Activated CD4-positive, alpha-beta memory T cell treated with anti-CD3 and anti-CD28 coated beads for 36 hours (primary cell): ENCODE measurements at regions of chr3 and their contacts with region 1.

Region 1: GRCh38 chr3:194654443-194654842 is 17.5 kb downstream of the LSG1 start:
- DNase-seq: no peak
- H3K4me3 Mint-ChIP-seq: peak overlapping the region; percentile 11
- H3K27ac Mint-ChIP-seq: peak overlapping the region; percentile 83
- H3K4me1 Mint-ChIP-seq: peaks cover 21% of the 10 kb centered on the region
- H3K27me3 Mint-ChIP-seq: no peaks in the 10 kb centered on the region

Region 2: GRCh38 chr3:194583604-194584318 is 70.7 kb before region 1 on chr3:
- CTCF ChIA-PET with region 1: no interaction called
- POLR2A ChIA-PET with region 1: no interaction called
- intact Hi-C with region 1: loop called (anchors 2 kb)
- DNase-seq: peak; percentile 96
- H3K4me3 Mint-ChIP-seq: peak overlapping the region; percentile 96
- H3K27ac Mint-ChIP-seq: peak overlapping the region; percentile 97
- H3K4me1 Mint-ChIP-seq: peaks cover 27% of the 10 kb centered on the region
- H3K27me3 Mint-ChIP-seq: no peaks in the 10 kb centered on the region

Region 3: DNA sequence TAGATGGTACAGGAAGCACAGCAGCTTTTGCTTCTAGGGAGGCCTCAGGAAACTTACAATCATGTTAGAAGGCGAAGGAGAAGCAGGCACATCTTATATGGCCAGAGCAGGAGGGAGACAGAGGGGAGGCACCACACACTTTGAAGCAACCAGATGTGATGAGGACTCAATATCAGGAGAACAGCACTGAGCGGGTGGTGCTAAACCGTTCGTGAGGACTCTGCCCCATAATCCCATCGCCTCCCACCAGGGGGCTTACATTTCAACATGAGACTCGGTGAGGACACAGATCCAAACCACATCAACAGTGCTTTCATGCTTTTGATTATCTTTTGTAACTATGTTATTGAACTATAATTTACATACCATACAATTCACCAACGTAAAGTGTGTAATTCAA is 13.6 kb before region 1 on chr3:
- CTCF ChIA-PET with region 1: interaction called, 3 read pairs
- POLR2A ChIA-PET with region 1: interaction called, 4 read pairs
- intact Hi-C with region 1: loop called (anchors 1 kb)
- DNase-seq: peak; percentile 37
- H3K4me3 Mint-ChIP-seq: no peak overlapping the region
- H3K27ac Mint-ChIP-seq: no peak overlapping the region
- H3K4me1 Mint-ChIP-seq: peaks cover 7% of the 10 kb centered on the region
- H3K27me3 Mint-ChIP-seq: no peaks in the 10 kb centered on the region

Region 4: GRCh38 chr3:194711913-194712312 is 57.5 kb after region 1 on chr3:
- CTCF ChIA-PET with region 1: no interaction called
- POLR2A ChIA-PET with region 1: no interaction called
- intact Hi-C with region 1: no loop called
- DNase-seq: no peak
- H3K4me3 Mint-ChIP-seq: no peak overlapping the region
- H3K27ac Mint-ChIP-seq: no peak overlapping the region
- H3K4me1 Mint-ChIP-seq: peaks cover 2% of the 10 kb centered on the region
- H3K27me3 Mint-ChIP-seq: peaks cover 2% of the 10 kb centered on the region